Natural killer cell (primary cell): ENCODE measurements at regions of chr1 and their contacts with region 1.

Region 1: GRCh38 chr1:77487631-77488030 is 194.8 kb downstream of the ZZZ3 start:
- DNase-seq: no peak
- ATAC-seq: no peak
- H3K4me3 ChIP-seq: no peak overlapping the region
- H3K4me3 Mint-ChIP-seq: no peak overlapping the region
- H3K27ac ChIP-seq: no peak overlapping the region
- H3K27ac Mint-ChIP-seq: no peak overlapping the region
- H3K4me1 ChIP-seq: peaks cover under 1% of the 10 kb centered on the region
- H3K4me1 Mint-ChIP-seq: peaks cover 27 to 31% of the 10 kb centered on the region in 2 donors
- H3K27me3 ChIP-seq: no peaks in the 10 kb centered on the region
- H3K27me3 Mint-ChIP-seq: no peaks in the 10 kb centered on the region
- CTCF ChIP-seq: no peak

Region 2: DNA sequence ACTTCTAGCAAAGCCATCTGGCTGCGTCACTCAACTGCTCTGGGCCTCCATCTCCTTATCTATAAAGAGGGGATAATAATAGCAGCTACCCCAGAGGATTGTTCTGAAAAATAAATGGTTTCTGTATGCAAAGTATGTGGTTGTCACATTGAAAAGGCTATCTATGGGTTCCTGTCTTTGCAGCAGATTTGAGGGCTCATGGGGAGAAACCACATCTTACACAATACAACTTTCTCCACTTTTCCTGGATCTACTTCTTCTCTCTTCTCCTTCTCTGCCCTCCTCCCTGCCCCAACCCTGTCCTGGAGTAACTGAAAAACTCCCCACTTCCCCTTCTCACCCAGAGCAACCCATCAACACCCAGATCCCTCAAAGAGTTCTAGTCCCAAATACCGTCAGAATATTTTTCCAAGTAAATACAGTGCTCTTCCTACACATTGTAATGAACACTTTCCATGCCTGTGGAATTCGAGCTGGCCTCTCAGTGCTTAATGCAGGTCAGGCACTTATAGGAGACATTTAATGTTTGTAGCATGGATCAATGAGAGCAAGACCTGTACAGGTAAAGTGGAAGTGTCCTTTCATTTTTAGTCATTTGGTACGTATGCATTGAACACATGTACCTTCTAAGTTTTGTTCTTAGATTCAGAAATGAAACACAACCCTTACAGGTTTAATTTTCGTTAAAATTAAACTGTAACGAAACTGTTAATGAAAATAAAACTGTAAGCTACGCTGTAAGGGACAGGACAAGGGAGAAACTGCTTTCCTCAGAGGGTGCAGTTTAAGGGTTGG is 73.9 kb before region 1 on chr1:
- intact Hi-C with region 1: loop called (anchors 1 kb)
- DNase-seq: no peak
- ATAC-seq: peak; percentile 40 to 71 (median 54)
- H3K4me3 ChIP-seq: no peak overlapping the region
- H3K4me3 Mint-ChIP-seq: peak overlapping the region; percentile 81
- H3K27ac ChIP-seq: no peak overlapping the region
- H3K27ac Mint-ChIP-seq: peak overlapping the region in 1 of 2 donors; percentile 42
- H3K4me1 ChIP-seq: peaks cover 20% of the 10 kb centered on the region
- H3K4me1 Mint-ChIP-seq: peaks cover 20 to 21% of the 10 kb centered on the region in 2 donors
- H3K27me3 ChIP-seq: peaks cover 7% of the 10 kb centered on the region
- H3K27me3 Mint-ChIP-seq: peaks cover 25 to 41% of the 10 kb centered on the region in 2 donors
- CTCF ChIP-seq: no peak

Region 3: GRCh38 chr1:77682460-77683159 is 195.0 kb after region 1 on chr1 and contains the start of gene ZZZ3:
- intact Hi-C with region 1: no loop called
- DNase-seq: peak; percentile 95 to 97
- ATAC-seq: peak; percentile 72 to 85 (median 73)
- H3K4me3 ChIP-seq: peak within 1 kb of the TSS; percentile 76
- H3K4me3 Mint-ChIP-seq: peak within 1 kb of the TSS; percentile 96
- H3K27ac ChIP-seq: peak within 1 kb of the TSS; percentile 86
- H3K27ac Mint-ChIP-seq: peak within 1 kb of the TSS; percentile 96
- H3K4me1 ChIP-seq: peaks cover 16% of the 10 kb centered on the region
- H3K4me1 Mint-ChIP-seq: peaks cover 37% of the 10 kb centered on the region in 2 donors
- H3K27me3 ChIP-seq: no peaks in the 10 kb centered on the region
- H3K27me3 Mint-ChIP-seq: no peaks in the 10 kb centered on the region
- CTCF ChIP-seq: no peak
- total RNA-seq, gene ZZZ3: 31.9 to 43.6 (median 38.9) TPM